HEK293T (cell line): ENCODE measurements at regions of chr10 and their contacts with region 1.

Region 1: DNA sequence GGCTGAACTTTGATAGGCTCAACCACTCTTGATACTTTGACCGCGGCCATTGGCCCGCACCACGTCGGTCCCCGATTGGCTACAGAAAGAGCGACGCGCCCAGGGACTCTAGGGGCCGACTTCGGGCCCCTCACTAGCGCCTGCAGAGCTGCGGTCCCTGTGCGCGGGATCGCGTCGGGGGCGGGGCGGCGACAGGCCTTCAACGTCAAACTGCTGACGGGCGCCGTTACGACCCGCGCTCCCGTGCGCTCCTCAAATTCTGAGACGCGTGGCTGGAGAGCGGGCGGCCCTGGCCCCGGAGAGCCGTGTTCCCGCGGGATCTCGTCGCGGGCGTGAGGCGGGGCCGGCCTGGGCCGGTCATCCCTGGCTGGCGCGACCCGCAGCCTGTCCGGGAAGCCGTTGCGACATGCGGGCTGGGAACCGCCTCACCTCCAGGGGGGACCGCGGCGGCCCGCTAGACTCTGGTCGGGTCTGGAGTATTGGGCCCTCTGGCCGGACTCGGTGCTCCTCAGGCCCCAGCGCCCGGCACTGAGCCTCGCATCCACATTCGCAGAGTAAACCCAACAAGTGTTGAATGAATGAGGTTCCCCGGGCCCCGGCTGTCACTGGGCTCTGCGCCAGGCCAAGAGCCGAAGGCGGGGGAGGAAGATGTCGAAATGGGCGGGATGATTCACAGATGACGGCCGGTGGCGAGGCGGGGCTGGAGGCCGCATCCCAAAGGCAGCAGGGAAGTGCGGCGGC is 644 bp upstream of the SLC25A28 start:
- DNase-seq: peak; percentile 95

Region 2: DNA sequence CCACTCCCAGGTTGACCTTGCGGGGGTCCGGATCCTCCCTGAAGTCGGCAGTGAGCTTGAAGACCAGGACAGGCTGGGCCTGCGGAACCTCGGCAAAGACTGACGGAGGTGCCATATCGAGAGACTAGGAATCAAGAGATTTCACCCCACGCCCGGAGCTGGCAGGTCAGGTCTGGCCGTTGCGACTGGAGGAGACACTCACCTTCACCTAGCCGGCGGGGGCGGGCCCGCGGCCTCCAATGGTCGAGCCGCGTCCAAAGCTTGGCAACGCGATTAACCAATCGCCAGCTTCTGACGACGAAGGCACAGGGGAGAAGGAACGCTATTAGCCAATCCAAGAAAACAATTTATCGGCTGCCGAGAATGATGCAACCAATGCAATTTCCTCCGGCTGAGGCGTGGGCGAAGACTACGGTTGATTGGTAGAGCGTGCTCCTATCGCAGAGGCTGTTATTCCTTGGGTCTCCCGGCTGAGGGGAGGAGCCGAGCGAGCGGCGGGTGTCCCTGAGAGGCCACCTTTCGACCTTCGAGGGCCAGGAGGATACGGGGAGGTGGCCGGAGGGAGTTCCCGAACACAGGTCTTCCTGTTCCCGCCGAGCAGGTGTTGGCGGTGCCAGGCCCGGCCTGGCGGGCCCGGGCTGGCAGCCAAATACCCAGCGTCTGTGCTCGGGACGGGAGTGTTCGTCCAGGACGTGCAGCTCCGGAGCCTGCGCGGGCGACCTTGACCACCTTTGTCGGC is 190.3 kb before region 1 on chr10 and contains the start of gene GOT1:
- CTCF ChIA-PET with region 1: interaction called, 10 read pairs
- POLR2A ChIA-PET with region 1: interaction called, 25 read pairs
- DNase-seq: peak; percentile 99

Region 3: GRCh38 chr10:99435986-99436638 is 184.8 kb before region 1 on chr10:
- CTCF ChIA-PET with region 1: interaction called, 10 read pairs
- POLR2A ChIA-PET with region 1: interaction called, 25 read pairs
- DNase-seq: no peak

Region 4: DNA sequence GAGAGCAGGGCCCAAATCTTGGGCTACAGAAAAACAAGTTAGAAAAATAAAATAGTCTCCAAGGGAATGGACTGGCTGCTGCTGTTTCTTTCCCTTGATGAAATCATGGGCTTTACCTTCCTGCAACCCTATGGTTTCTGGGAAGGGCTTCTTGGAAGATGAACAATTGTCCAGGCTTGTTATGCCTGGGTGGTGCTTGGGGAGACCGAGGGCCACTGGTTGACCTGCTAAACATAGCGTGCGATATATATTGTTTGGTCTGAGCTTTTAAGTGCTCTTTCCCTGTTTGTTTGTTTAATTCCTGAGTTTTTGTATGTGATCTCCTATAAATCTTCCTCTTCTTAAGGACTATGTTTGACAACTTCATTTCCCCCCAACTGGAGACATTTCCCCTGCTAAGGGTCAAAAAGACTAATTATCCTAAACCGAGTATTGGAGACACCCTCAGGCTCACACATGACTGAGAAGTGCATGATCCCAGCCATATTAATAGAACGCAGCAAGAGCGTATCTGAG is 38.6 kb before region 1 on chr10:
- CTCF ChIA-PET with region 1: no interaction called
- POLR2A ChIA-PET with region 1: no interaction called
- DNase-seq: no peak

Region 5: GRCh38 chr10:99598781-99599509 is 21.9 kb before region 1 on chr10:
- CTCF ChIA-PET with region 1: no interaction called
- POLR2A ChIA-PET with region 1: interaction called, 15 read pairs
- DNase-seq: no peak

Region 6: DNA sequence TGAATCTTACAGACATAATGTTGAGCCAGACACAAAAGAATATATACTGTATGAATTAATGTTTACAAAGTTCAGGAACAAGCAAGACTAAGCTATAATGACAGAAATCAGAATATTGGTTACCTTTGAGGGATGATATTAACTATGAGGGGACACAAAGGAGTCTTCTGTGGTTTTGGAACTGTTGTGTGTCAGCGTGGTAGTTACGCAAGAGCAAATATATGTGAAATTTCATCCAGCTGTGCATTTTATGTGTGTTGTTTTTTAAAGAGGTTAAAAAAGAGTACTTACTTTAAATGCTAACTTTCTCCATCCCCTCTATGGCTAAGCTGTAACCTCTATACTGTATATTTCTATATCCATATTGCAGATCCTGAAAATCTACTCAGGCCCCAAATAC is 15.5 kb before region 1 on chr10:
- CTCF ChIA-PET with region 1: no interaction called
- POLR2A ChIA-PET with region 1: interaction called, 14 read pairs
- DNase-seq: no peak

Region 7: DNA sequence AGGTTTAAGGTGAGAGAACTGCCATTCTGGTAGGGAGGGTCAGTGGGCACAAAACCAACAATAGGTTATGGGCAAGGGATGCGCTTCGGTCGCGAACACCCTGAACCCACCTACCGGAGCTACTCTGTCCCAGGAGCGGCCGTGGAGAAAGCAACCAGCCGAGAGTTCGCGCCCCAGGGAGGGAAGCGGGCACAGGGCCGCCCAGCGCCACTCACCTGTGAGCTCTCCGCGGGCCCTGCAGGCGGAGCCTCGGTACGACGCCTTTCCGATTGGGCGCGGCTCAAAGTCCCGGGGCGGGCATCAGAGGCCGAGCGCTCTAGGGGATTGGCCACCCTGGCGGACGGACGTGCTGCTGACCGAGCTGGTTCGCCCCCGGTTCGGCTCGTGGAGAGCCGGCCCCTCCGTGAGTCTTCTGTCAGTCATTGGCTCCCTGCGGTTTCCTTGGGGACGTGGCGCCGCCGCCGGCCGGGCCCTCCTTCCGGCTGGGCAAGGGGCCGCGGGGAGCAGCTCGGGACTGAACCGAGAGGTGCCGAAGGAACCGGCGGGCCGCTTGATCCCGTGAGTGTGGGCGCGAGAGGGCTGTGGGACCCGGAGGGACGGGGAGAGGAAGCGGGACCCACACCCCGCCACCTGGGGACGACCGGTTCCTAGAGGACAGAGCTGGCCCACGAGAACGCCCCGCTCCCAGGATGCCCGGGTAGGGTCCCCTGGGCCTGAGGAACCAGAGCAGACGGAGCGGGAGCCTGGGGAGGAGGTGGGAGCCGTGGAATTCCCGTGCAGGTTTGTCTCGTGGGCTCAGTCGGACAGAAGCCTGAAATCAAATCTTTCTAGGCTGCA is 38.4 kb after region 1 on chr10 and contains the start of gene ENTPD7:
- CTCF ChIA-PET with region 1: no interaction called
- POLR2A ChIA-PET with region 1: interaction called, 34 read pairs
- DNase-seq: peak; percentile 100

Region 8: GRCh38 chr10:99732033-99732912 is 111.4 kb after region 1 on chr10 and contains the starts of genes COX15 and CUTC:
- CTCF ChIA-PET with region 1: no interaction called
- POLR2A ChIA-PET with region 1: interaction called, 32 read pairs
- DNase-seq: peak; percentile 99

Region 9: DNA sequence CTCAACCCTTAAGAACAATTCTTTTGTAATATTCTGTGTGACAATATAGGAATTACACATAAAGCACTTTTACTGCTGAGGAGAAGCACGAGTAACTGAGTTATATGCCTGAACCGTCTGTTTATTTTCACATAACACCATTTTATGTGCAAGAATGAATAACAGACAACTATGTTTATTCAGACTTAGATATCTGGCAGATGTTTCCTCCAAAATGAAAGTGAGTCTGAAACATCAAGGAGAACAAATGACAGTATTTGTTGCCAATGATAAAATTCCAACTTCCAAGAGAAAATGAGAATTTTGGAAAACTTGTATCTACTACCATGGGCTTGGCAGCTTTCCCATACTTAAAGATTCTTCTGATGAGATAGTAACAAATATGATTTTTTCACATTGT is 337.4 kb after region 1 on chr10:
- CTCF ChIA-PET with region 1: no interaction called
- POLR2A ChIA-PET with region 1: no interaction called
- DNase-seq: no peak